ENCODE measurements at regions of chr2 and their contacts with region 1.

Region 1: DNA sequence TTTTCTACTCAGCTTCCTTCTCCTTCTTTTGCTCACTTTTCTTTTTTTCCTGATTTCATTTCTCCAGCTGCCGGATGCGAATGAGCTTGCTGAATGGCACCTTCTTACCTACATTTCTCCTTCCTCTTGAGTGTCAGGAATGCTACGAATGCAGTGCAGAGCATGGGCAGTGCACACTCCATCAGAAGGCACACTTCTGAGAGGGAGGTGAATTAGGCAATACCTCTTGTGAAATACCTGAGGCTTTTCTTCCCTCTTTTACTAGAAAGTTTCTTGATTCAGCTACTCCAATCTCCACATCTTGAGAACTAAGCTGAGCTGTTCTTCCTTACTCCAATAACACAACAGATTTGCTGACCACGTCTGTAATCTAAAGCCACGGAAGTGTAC is 51.1 kb downstream of the PLEKHM3 start:
- DNase-seq: peak; percentile 13 to 88
- H3K4me3 ChIP-seq: no peak overlapping the region
- H3K27ac ChIP-seq: peak overlapping the region; percentile 32; the same call in 1 of the 2 replicates
- H3K4me1 ChIP-seq: peaks cover 13% of the 10 kb centered on the region
- H3K27me3 ChIP-seq: no peaks in the 10 kb centered on the region
- CTCF ChIP-seq: no peak

Region 2: GRCh38 chr2:208033758-208034502 is 59.7 kb after region 1 on chr2:
- CTCF ChIA-PET with region 1: interaction called, 13 read pairs
- POLR2A ChIA-PET with region 1: no interaction called
- intact Hi-C with region 1: no loop called
- DNase-seq: peak; percentile 48 to 91
- H3K4me3 ChIP-seq: no peak overlapping the region
- H3K27ac ChIP-seq: peak overlapping the region; percentile 61
- H3K4me1 ChIP-seq: peaks cover 55% of the 10 kb centered on the region
- H3K27me3 ChIP-seq: no peaks in the 10 kb centered on the region
- CTCF ChIP-seq: peak; percentile 55